ENCODE measurements at regions of chr15 and their contacts with region 1.

Region 1: DNA sequence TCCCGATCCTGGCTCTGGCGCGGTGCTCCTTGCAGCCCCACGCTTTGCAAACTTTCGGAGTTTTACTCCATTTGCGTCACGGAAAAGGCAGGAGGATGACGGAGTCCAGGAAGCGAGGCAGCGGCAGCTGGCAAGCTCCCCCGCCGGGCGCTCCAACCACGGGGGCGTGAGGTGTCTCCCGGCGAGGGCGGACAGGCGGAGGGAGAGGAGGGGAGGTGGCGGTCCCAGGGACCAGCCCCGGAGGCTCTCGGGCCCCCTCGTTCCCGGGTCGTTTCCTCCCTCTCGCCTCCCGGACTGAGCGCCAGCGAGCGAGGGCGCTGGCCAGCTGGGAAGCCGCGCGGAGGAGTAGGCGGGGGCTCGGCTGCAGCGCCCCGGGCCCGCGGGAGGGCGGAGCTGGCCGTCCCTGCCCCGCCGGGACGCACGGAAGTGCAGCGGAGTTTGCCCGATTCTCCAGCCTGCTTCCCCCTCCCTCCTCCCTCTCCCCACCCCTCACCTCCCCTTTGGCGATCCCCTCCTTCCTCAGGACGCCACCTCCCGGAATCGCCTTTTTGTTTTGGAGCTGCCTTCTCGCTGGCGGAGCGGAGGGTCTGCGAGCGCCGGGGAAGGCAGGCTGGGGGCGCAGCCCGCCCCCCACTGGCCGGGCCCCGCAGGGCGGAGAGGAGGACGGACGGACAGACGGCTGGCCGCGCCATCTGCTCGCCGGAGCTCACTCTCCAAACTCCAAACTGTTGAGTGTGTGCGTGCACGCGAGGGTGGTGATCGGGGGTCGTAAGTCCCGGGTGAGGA is at the start of gene SNX33:
- DNase-seq: peak; percentile 72
- ATAC-seq: peak; percentile 72
- H3K4me3 Mint-ChIP-seq: peak within 1 kb of the TSS; percentile 76
- H3K27ac Mint-ChIP-seq: no peak within 1 kb of the TSS
- H3K4me1 Mint-ChIP-seq: peaks cover 26% of the 10 kb centered on the region
- H3K27me3 Mint-ChIP-seq: peaks cover 19% of the 10 kb centered on the region
- total RNA-seq, gene SNX33: 1.4 to 3.5 TPM

Region 2: DNA sequence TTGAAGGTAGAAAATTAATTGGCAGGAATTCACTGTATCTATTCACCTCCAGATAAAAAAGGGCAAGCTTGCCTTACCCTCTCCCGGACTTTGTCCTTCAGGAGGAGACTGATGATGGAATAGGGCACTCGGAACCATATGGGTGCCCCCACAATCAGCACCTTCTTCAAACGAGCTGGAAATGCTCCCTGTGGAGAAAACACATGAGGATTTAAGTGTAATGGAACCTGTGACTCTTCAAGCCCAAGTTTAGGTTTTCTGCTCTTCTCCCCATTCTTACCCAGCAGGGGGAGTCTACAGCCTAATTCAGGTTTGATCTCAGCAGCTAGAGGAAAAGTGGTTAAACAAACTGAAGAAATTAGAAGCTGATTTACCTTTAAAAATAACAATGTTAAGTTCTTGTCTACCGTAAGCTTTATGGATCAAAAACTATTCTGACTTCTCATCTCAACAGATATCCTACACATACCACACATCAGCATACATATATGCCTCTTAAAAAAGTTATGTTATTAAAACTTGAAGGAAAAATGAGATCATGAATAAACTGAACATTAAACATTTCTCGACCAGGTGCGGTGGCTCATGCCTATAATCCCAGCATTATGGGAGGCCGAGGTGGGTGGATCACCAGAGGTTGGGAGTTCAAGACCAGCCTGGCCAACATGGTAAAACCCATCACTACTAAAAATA is 138.6 kb before region 1 on chr15:
- CTCF ChIA-PET with region 1: interaction called, 25 read pairs
- DNase-seq: peak; percentile 43
- ATAC-seq: peak; percentile 30
- H3K4me3 Mint-ChIP-seq: no peak overlapping the region
- H3K27ac Mint-ChIP-seq: no peak overlapping the region
- H3K4me1 Mint-ChIP-seq: no peaks in the 10 kb centered on the region
- H3K27me3 Mint-ChIP-seq: no peaks in the 10 kb centered on the region

Region 3: GRCh38 chr15:75684642-75685041 is 37.1 kb after region 1 on chr15:
- CTCF ChIA-PET with region 1: interaction called, 10 read pairs
- DNase-seq: no peak
- ATAC-seq: no peak
- H3K4me3 Mint-ChIP-seq: no peak overlapping the region
- H3K27ac Mint-ChIP-seq: no peak overlapping the region
- H3K4me1 Mint-ChIP-seq: no peaks in the 10 kb centered on the region
- H3K27me3 Mint-ChIP-seq: no peaks in the 10 kb centered on the region

Measured in activated CD8-positive, alpha-beta memory T cell treated with anti-CD3 and anti-CD28 coated beads, Interleukin-2, amount 10 ng/mL, durations not matched to agents 7 days and 5 days (primary cell).